ENCODE measurements at regions of chr16 and their contacts with region 1.

Region 1: GRCh38 chr16:3400779-3401688 is at the starts of genes ZNF174 and ZSCAN32:
- DNase-seq: peak; percentile 97 to 99
- ATAC-seq: peak; percentile 99 to 100 (median 100)
- H3K4me3 ChIP-seq: peak within 1 kb of the TSS; percentile 64 to 99 (median 85)
- H3K27ac ChIP-seq: peak within 1 kb of the TSS; percentile 16 to 92 (median 86)
- H3K4me1 ChIP-seq: peaks cover 0 to 38% (median 21%) of the 10 kb centered on the region in 9 donors
- H3K27me3 ChIP-seq: no peaks in the 10 kb centered on the region
- CTCF ChIP-seq: peak in 3 of 9 donors; percentile 11 to 37 (median 29)
- total RNA-seq, gene ZNF174: 7.0 to 14.4 (median 9.9) TPM
- total RNA-seq, gene ZSCAN32: 5.0 to 9.0 (median 6.9) TPM

Region 2: GRCh38 chr16:3234543-3235541 is 166.2 kb before region 1 on chr16 and contains the start of gene ZNF200:
- intact Hi-C with region 1: loop called in 1 of 10 experiments (anchors 10 kb)
- DNase-seq: peak; percentile 96 to 97
- ATAC-seq: peak; percentile 99 to 100 (median 99)
- H3K4me3 ChIP-seq: peak within 1 kb of the TSS; percentile 68 to 95 (median 84)
- H3K27ac ChIP-seq: peak within 1 kb of the TSS; percentile 85 to 99 (median 96)
- H3K4me1 ChIP-seq: peaks cover 4 to 19% (median 14%) of the 10 kb centered on the region in 9 donors
- H3K27me3 ChIP-seq: no peaks in the 10 kb centered on the region
- CTCF ChIP-seq: no peak
- total RNA-seq, gene ZNF200: 4.6 to 8.9 (median 6.1) TPM

Region 3: GRCh38 chr16:3317315-3317999 is 83.6 kb before region 1 on chr16:
- intact Hi-C with region 1: loop called in 1 of 10 experiments (anchors 10 kb)
- DNase-seq: no peak
- ATAC-seq: no peak
- H3K4me3 ChIP-seq: no peak overlapping the region
- H3K27ac ChIP-seq: no peak overlapping the region
- H3K4me1 ChIP-seq: no peaks in the 10 kb centered on the region
- H3K27me3 ChIP-seq: no peaks in the 10 kb centered on the region
- CTCF ChIP-seq: no peak

Region 4: GRCh38 chr16:3443108-3444031 is 42.3 kb after region 1 on chr16 and contains the starts of genes NAA60 and ZNF597:
- intact Hi-C with region 1: loop called in 3 of 10 experiments (anchors 5 kb)
- DNase-seq: peak; percentile 75 to 88
- ATAC-seq: peak; percentile 96 to 99 (median 98)
- H3K4me3 ChIP-seq: peak within 1 kb of the TSS; percentile 37 to 79 (median 64)
- H3K27ac ChIP-seq: peak within 1 kb of the TSS; percentile 55 to 93 (median 83)
- H3K4me1 ChIP-seq: peaks cover 0 to 22% (median 10%) of the 10 kb centered on the region in 9 donors
- H3K27me3 ChIP-seq: no peaks in the 10 kb centered on the region
- CTCF ChIP-seq: no peak
- total RNA-seq, gene NAA60: 32.1 to 57.5 (median 37.7) TPM
- total RNA-seq, gene ZNF597: 1.1 to 2.4 (median 1.8) TPM

Region 5: GRCh38 chr16:3503523-3503922 is 102.5 kb after region 1 on chr16:
- intact Hi-C with region 1: loop called in 3 of 10 experiments (anchors 1 to 10 kb)
- DNase-seq: no peak
- ATAC-seq: no peak
- H3K4me3 ChIP-seq: no peak overlapping the region
- H3K27ac ChIP-seq: peak overlapping the region in 1 of 10 donors; percentile 73
- H3K4me1 ChIP-seq: peaks cover 2 to 47% (median 12%) of the 10 kb centered on the region in 9 donors
- H3K27me3 ChIP-seq: no peaks in the 10 kb centered on the region
- CTCF ChIP-seq: no peak

Region 6: GRCh38 chr16:3536271-3536731 is 135.3 kb after region 1 on chr16:
- intact Hi-C with region 1: no loop called
- DNase-seq: no peak
- ATAC-seq: no peak
- H3K4me3 ChIP-seq: no peak overlapping the region
- H3K27ac ChIP-seq: peak overlapping the region in 6 of 10 donors; percentile 33 to 65 (median 56)
- H3K4me1 ChIP-seq: peaks cover 0 to 17% (median 0%) of the 10 kb centered on the region in 9 donors
- H3K27me3 ChIP-seq: no peaks in the 10 kb centered on the region
- CTCF ChIP-seq: no peak